Panc1 (cell line): ENCODE measurements at regions of chr9 and their contacts with region 1.

Region 1: GRCh38 chr9:101566904-101567724 is 27.7 kb downstream of the PPP3R2 start:
- DNase-seq: no peak
- ATAC-seq: no peak
- H3K4me3 ChIP-seq: no peak overlapping the region
- H3K27ac ChIP-seq: no peak overlapping the region
- H3K4me1 ChIP-seq: no peaks in the 10 kb centered on the region
- H3K27me3 ChIP-seq: no peaks in the 10 kb centered on the region
- CTCF ChIP-seq: peak; percentile 58

Region 2: GRCh38 chr9:101578378-101578777 is 11.3 kb after region 1 on chr9:
- CTCF ChIA-PET with region 1: no interaction called
- POLR2A ChIA-PET with region 1: interaction called, 17 read pairs
- in situ Hi-C with region 1: no loop called
- intact Hi-C with region 1: no loop called
- DNase-seq: no peak
- ATAC-seq: no peak
- H3K4me3 ChIP-seq: no peak overlapping the region
- H3K27ac ChIP-seq: no peak overlapping the region
- H3K4me1 ChIP-seq: no peaks in the 10 kb centered on the region
- H3K27me3 ChIP-seq: no peaks in the 10 kb centered on the region
- CTCF ChIP-seq: no peak

Region 3: DNA sequence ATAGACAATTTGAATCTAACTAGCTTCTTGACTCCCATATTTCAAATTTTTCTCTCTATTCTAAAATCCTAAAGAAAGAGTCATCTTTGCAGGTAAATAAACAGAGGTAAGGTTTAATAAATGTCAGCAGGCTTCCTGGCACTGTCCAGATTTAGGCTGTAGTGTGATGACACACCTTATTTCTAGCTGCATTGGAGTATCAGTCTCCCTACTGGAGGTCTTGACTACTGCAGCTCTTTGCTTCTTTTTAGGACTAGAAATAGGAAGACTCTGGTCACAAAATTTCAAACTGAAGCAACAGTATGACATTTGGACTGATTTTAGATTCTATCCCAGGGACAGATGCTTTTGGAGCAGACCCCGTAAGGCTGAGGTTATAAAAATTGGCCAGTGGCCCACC is 68.4 kb after region 1 on chr9:
- CTCF ChIA-PET with region 1: no interaction called
- POLR2A ChIA-PET with region 1: no interaction called
- in situ Hi-C with region 1: no loop called
- intact Hi-C with region 1: no loop called
- DNase-seq: no peak
- ATAC-seq: no peak
- H3K4me3 ChIP-seq: no peak overlapping the region
- H3K27ac ChIP-seq: no peak overlapping the region
- H3K4me1 ChIP-seq: no peaks in the 10 kb centered on the region
- H3K27me3 ChIP-seq: no peaks in the 10 kb centered on the region
- CTCF ChIP-seq: no peak